ENCODE measurements at regions of chr4 and their contacts with region 1.

Region 1: GRCh38 chr4:76723924-76724323 is 174.0 kb downstream of the SOWAHB start:
- DNase-seq: peak; percentile 68
- ATAC-seq: peak; percentile 70
- H3K4me3 ChIP-seq: peak overlapping the region; percentile 6 to 29; a peak in 3 of 4 replicates
- H3K27ac ChIP-seq: peak overlapping the region; percentile 25; the same call in 1 of the 2 replicates
- H3K4me1 ChIP-seq: peaks cover 39 to 41% of the 10 kb centered on the region in 2 experiments
- H3K27me3 ChIP-seq: no peaks in the 10 kb centered on the region
- CTCF ChIP-seq: no peak
- POLR2A ChIP-seq: no peak
- RAD21 ChIP-seq: no peak

Region 2: DNA sequence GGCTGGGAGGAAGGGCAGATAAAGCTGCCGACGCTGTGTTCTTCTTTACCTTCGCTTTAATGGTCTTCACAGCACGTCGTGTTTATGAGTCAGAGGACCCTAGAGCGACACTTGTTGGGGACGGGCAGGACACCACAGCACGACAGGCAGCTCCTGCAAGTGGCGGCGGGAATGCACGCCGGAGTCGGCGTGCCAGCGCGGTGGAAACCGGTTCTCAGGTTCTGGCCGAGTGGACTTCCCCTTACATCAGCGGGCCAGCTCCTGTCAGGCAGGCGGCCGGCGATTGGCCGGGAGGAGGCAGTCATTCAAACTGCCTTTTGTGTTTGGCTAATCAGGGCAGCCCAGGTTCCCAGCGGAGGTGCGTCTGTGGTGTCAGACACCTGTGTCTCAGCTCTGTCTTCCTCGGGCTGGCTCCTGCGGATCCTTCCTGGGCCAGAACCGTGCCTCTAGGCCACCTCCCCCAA is 138.0 kb before region 1 on chr4:
- CTCF ChIA-PET with region 1: no interaction called
- POLR2A ChIA-PET with region 1: interaction called, 8 read pairs
- RAD21 ChIA-PET with region 1: no interaction called
- intact Hi-C with region 1: loop called (anchors 5 kb)
- DNase-seq: peak; percentile 81
- ATAC-seq: peak; percentile 93
- H3K4me3 ChIP-seq: peak overlapping the region; percentile 56 to 62
- H3K27ac ChIP-seq: no peak overlapping the region
- H3K4me1 ChIP-seq: peaks cover 17 to 47% of the 10 kb centered on the region in 2 experiments
- H3K27me3 ChIP-seq: no peaks in the 10 kb centered on the region
- CTCF ChIP-seq: peak in 1 of 3 experiments; percentile 21; a peak in 2 of 6 replicates
- POLR2A ChIP-seq: no peak
- RAD21 ChIP-seq: 0 out of 2 replicates have a peak, but pooled peaks have one; percentile 9